Sigmoid colon (tissue), 7 donors: ENCODE measurements at regions of chr1 and their contacts with region 1.

Region 1: GRCh38 chr1:223700942-223701637 is 11.2 kb upstream of the CAPN2 start:
- DNase-seq: no peak
- H3K4me3 ChIP-seq: no peak overlapping the region
- H3K27ac ChIP-seq: peak overlapping the region; percentile 56 to 87 (median 72)
- H3K4me1 ChIP-seq: peaks cover 0 to 35% (median 31%) of the 10 kb centered on the region in 4 donors
- H3K27me3 ChIP-seq: no peaks in the 10 kb centered on the region
- CTCF ChIP-seq: no peak
- EP300 ChIP-seq: no peak
- POLR2A ChIP-seq: no peak

Region 2: GRCh38 chr1:223748773-223749733 is 48.0 kb after region 1 on chr1:
- intact Hi-C with region 1: loop called (anchors 1 kb)
- DNase-seq: peak; percentile 82
- H3K4me3 ChIP-seq: peak overlapping the region; percentile 30 to 58 (median 48)
- H3K27ac ChIP-seq: peak overlapping the region; percentile 70 to 83 (median 76)
- H3K4me1 ChIP-seq: peaks cover 0 to 15% (median 12%) of the 10 kb centered on the region in 4 donors
- H3K27me3 ChIP-seq: no peaks in the 10 kb centered on the region
- CTCF ChIP-seq: peak; percentile 74 to 98 (median 90)
- EP300 ChIP-seq: no peak
- POLR2A ChIP-seq: no peak